ENCODE measurements at regions of chr11 and their contacts with region 1.

Region 1: DNA sequence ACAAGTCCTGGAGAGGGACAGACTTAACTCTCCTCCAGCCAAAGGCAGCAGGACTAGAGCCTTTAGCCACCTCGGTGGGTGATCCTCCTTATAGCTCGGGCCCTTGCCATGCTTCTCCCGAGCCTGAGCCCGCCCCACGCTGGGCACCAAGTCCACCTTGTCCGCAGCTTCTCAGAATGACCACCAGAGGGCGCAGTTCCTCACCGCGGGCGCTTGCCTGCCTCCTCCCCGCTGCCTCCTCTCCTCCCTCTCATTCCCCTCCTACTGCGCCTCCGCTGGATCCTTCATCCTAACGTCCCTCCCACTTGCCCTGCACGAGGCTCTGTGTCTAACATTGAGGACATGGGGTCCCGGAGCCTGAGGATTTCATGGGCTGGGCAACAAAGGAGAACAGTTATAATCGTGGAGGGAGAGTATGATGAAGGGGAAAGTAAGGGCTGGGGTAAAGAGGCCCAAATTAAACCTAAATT is 11.3 kb upstream of the MOGAT2 start:
- DNase-seq: peak; percentile 72
- H3K4me3 ChIP-seq: no peak overlapping the region
- H3K27ac ChIP-seq: no peak overlapping the region
- H3K4me1 ChIP-seq: no peaks in the 10 kb centered on the region
- H3K27me3 ChIP-seq: peaks cover 0 to 3% of the 10 kb centered on the region in 2 experiments
- CTCF ChIP-seq: peak; percentile 94 to 98
- POLR2A ChIP-seq: no peak

Region 2: DNA sequence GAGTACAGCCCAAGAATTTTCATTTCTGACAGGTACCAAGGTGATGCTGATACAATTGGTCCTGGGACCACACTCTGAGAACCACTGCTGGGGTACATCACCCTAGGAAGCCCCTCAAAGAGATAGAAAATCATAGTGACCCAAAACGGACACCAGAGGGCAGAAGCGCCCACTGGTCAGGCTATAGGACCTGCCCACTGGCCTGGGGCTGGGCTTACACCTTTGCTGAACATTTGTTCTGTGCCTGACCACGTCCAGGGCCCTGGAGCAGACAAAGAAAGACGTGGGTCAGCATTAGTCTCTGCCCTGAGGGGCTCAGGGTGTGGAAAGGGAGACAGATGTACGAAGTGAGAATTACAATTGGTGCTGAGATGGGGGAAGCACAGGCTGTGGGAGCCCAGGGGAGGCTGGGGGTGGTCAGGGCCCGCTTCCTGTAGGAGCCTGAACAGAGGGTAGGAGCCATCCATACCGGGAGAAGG is 158.7 kb before region 1 on chr11:
- CTCF ChIA-PET with region 1: interaction called, 7 read pairs
- POLR2A ChIA-PET with region 1: no interaction called
- dilution Hi-C with region 1: no loop called
- intact Hi-C with region 1: loop called (anchors 1 kb)
- DNase-seq: peak; percentile 77
- H3K4me3 ChIP-seq: no peak overlapping the region
- H3K27ac ChIP-seq: no peak overlapping the region
- H3K4me1 ChIP-seq: no peaks in the 10 kb centered on the region
- H3K27me3 ChIP-seq: peaks cover 0 to 2% of the 10 kb centered on the region in 2 experiments
- CTCF ChIP-seq: peak; percentile 81 to 82
- POLR2A ChIP-seq: peak; percentile 7

Region 3: DNA sequence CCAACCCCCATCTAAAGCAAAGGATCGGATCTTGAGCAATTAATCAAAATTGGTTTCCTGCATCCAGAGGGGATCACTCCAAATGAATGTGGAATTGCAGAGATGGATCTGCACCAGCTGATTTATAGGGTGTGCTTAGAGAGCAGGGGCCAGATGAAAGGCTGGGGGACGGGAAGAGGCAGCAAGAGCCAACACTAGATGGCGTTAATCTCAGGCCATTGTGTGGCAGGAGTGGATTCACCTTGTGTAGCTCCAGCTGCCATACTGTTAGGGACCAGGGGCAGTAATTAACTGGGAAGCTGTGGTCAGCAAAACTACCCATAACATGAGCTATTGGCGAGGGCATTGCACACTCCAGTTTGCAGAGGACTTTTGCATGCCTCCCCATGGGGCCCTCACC is 108.7 kb before region 1 on chr11:
- CTCF ChIA-PET with region 1: interaction called, 33 read pairs
- POLR2A ChIA-PET with region 1: no interaction called
- dilution Hi-C with region 1: no loop called
- intact Hi-C with region 1: loop called (anchors 1 kb)
- DNase-seq: peak; percentile 41
- H3K4me3 ChIP-seq: no peak overlapping the region
- H3K27ac ChIP-seq: no peak overlapping the region
- H3K4me1 ChIP-seq: peaks cover 5% of the 10 kb centered on the region
- H3K27me3 ChIP-seq: no peaks in the 10 kb centered on the region
- CTCF ChIP-seq: peak; percentile 52 to 71
- POLR2A ChIP-seq: no peak

Region 4: DNA sequence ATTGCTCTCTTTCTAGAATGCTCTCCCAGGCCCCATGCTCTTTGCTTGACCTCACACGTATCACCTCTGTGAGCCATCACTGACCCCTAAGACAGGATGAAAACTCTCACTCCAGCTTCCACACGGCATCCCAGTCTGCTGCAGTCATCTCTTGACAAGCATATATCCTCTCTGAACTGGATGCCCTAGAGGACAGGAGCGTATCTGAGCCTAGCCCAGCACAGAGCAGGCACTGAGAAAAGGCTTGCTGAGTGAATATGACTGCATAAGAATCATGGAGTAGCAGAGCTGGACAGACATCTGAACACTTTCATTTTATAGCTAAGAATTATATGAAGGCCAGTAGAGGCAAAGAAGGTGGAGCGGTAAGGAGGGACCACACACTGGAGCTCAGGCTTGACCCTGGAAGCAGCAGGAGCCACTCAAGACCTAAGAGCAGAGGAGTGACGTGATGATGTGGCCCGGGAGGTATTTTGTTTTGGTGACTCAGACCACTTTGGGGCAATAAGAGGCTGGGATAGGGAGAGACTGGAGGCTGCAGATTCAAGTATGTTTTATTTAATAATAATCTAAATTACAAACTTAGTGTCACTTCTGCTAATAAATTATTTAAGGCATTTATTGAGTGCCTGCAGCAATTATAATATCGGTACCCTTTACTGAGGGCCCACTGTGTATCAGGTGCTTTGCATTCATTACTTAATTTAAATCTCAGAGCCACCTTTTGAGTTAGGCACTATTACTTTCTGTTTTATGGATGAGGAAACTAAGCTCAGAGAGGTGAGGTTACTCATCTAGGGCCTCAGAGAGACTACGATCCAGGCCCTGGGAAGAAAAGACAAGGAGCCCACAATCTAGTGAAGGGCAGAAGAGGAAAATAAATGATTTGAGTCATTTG is 80.1 kb before region 1 on chr11:
- CTCF ChIA-PET with region 1: no interaction called
- POLR2A ChIA-PET with region 1: no interaction called
- dilution Hi-C with region 1: no loop called
- intact Hi-C with region 1: no loop called
- DNase-seq: no peak
- H3K4me3 ChIP-seq: no peak overlapping the region
- H3K27ac ChIP-seq: no peak overlapping the region
- H3K4me1 ChIP-seq: peaks cover 2% of the 10 kb centered on the region
- H3K27me3 ChIP-seq: peaks cover 7 to 9% of the 10 kb centered on the region in 2 experiments
- CTCF ChIP-seq: no peak
- POLR2A ChIP-seq: no peak

Region 5: DNA sequence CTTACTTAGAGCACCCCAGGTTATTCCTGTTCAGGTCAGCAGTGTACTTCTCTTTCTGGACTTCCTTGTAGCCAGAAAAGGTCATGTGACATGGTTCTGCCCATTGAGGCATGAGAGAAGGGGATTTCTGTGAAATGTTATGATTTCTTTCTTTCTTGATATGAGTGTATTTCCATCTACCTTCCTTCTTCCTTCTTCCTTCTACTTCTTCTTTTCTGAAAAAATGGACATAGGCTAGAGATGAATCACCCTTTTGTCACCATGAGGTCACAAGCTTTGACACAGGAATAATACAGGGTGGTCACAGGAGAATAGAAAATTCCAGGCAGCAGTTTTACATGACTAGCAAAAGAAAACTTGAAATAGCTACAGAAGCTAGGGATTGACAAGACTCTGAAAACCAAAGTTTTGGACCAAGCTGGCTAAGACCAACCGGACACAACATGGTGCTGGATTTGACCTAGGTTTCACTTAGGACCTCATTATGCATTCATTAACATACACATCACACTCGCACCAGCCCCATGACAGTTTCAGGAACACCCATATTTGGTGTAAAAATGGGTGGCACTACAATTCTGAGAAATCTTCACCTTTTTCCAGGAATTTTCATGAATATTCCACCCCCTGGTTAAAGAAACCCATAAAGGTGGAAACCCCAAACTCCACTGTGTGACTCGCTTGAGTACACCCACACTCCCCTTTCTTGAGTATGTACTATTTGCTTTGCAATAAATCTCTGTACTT is 16.3 kb before region 1 on chr11:
- CTCF ChIA-PET with region 1: interaction called, 13 read pairs
- POLR2A ChIA-PET with region 1: no interaction called
- dilution Hi-C with region 1: no loop called
- intact Hi-C with region 1: no loop called
- DNase-seq: no peak
- H3K4me3 ChIP-seq: no peak overlapping the region
- H3K27ac ChIP-seq: no peak overlapping the region
- H3K4me1 ChIP-seq: no peaks in the 10 kb centered on the region
- H3K27me3 ChIP-seq: peaks cover 12 to 16% of the 10 kb centered on the region in 2 experiments
- CTCF ChIP-seq: no peak
- POLR2A ChIP-seq: no peak

Measured in endothelial cell of umbilical vein (primary cell).